ENCODE measurements at regions of chr13 and their contacts with region 1.

Region 1: DNA sequence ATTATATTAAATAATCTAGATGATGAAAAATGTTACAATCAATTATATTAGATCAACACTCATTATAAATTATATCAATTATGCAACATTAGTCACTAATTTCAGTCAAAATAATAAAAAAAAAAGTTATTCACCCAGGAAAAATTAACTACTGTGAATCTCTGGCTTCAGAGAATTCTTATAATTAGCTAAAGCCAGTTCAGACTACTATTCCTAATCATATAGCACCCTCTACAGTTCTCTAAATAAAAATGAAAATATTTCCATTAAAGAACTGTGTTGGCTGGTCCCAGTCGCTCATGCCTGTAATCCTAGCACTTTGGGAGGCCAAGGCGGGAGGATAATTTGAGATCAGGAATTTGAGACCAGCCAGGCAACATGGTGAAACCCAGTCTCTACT is 33.0 kb downstream of the XPO4 start:
- DNase-seq: no peak
- ATAC-seq: no peak
- H3K4me3 ChIP-seq: no peak overlapping the region
- H3K4me3 Mint-ChIP-seq: no peak overlapping the region
- H3K27ac ChIP-seq: no peak overlapping the region
- H3K27ac Mint-ChIP-seq: no peak overlapping the region
- H3K4me1 ChIP-seq: no peaks in the 10 kb centered on the region
- H3K4me1 Mint-ChIP-seq: peaks cover 10 to 51% (median 41%) of the 10 kb centered on the region in 7 donors
- H3K27me3 ChIP-seq: no peaks in the 10 kb centered on the region
- H3K27me3 Mint-ChIP-seq: no peaks in the 10 kb centered on the region

Region 2: DNA sequence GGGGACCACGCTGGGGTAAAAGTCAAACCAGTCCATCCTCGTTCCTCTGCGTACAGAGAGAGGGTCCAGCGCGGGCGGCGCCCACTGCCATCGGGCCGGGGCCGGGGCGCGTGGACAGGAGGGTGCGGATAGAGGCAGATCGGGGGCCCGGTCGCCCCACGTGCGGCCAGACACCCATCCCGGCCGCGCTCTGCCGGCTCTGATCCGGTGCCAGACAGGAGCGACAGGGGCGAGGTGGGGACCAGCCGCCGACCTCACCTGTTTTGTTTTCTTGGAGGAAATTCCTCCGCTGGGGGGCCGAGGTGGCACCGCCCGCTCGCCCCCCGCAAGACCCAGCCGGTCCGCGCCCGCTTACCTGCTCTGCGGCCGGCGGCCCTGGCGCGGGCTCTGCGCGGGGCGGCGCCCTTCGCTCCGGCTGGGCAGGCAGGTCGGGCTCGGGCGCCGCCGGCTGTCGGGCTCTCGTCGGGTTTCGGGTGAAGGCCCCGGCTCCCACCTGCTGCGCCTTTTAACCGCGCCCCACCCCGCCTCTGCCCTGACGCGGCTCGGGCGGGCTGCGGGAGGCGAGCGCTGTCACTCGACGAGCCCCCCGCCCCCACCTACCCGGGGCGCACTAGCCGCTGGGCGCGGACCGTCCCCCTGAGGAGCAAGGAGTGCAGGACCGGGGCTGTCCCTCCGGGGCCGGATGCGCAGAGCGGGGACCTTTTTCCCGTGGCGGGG is 637.5 kb before region 1 on chr13 and contains the start of gene GJB6:
- CTCF ChIA-PET with region 1: no interaction called
- POLR2A ChIA-PET with region 1: no interaction called
- intact Hi-C with region 1: no loop called
- DNase-seq: peak in 8 of 9 donors; percentile 4 to 41 (median 24)
- ATAC-seq: peak; percentile 68
- H3K4me3 ChIP-seq: peak within 1 kb of the TSS; percentile 58
- H3K4me3 Mint-ChIP-seq: peak within 1 kb of the TSS; percentile 82 to 95 (median 89)
- H3K27ac ChIP-seq: no peak within 1 kb of the TSS
- H3K27ac Mint-ChIP-seq: peak within 1 kb of the TSS in 8 of 9 donors; percentile 25 to 90 (median 79)
- H3K4me1 ChIP-seq: peaks cover 6 to 17% of the 10 kb centered on the region in 2 donors
- H3K4me1 Mint-ChIP-seq: peaks cover 0 to 20% (median 12%) of the 10 kb centered on the region in 7 donors
- H3K27me3 ChIP-seq: no peaks in the 10 kb centered on the region
- H3K27me3 Mint-ChIP-seq: peaks cover 6 to 54% (median 23%) of the 10 kb centered on the region in 5 donors
- total RNA-seq, gene GJB6: 0.22 to 2.4 (median 1.4) TPM

Region 3: GRCh38 chr13:20848944-20849343 is 20.6 kb before region 1 on chr13:
- CTCF ChIA-PET with region 1: no interaction called
- POLR2A ChIA-PET with region 1: no interaction called
- intact Hi-C with region 1: loop called in 1 of 2 experiments (anchors 2 kb)
- DNase-seq: no peak
- ATAC-seq: no peak
- H3K4me3 ChIP-seq: no peak overlapping the region
- H3K4me3 Mint-ChIP-seq: no peak overlapping the region
- H3K27ac ChIP-seq: no peak overlapping the region
- H3K27ac Mint-ChIP-seq: peak overlapping the region in 3 of 9 donors; percentile 21 to 67 (median 32)
- H3K4me1 ChIP-seq: no peaks in the 10 kb centered on the region
- H3K4me1 Mint-ChIP-seq: peaks cover 0 to 13% (median 0%) of the 10 kb centered on the region in 7 donors
- H3K27me3 ChIP-seq: no peaks in the 10 kb centered on the region
- H3K27me3 Mint-ChIP-seq: no peaks in the 10 kb centered on the region